K562 (cell line): ENCODE measurements at regions of chr4 and their contacts with region 1.

Region 1: DNA sequence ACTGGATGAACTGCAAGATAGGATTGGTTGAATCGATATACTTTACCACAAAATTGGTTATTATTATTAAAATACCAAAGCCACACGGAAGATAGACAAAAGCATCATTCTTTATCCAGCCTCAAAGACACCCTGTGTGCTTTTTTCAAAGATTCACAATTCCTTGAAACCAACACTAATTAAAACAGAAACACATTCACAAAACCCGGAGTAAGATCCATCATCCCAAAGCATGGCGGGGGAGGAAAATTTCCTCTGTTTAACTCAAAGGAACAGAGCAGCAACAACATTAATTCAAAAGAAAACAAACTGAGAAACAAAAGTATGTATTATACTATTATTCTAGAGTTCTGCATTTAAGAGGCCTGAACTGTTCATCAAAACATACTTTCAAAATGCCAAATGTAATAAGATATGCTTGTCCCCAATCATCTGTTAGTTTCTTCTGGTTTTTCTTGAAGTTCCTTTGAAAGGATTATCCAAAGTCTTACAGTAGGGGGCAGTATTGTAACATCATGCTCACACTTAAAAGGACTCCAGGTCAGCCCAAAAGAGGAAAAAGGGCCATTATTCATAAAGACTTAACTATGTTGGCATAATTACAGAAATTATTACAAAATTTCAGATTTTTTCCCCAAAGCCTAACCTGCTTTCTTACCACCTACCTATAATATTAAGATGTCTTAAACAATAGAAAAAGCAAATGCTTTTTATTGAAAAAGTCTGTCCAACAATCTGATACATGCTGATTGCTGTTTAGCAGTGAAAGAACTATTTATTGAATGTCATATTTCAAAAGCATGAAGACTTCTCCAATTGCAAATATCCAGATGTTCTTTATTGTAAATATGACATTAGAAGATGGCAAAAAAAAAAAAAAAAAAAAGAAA is 168.7 kb downstream of the SCFD2 start:
- DNase-seq: peak; percentile 49 to 77 (median 56)
- ATAC-seq: peak; percentile 86
- H3K4me3 ChIP-seq: no peak overlapping the region
- H3K27ac ChIP-seq: no peak overlapping the region
- H3K4me1 ChIP-seq: no peaks in the 10 kb centered on the region
- H3K27me3 ChIP-seq: no peaks in the 10 kb centered on the region
- CTCF ChIP-seq: peak; percentile 57 to 83 (median 60); a peak in 5 of 6 replicates
- EP300 ChIP-seq: no peak
- POLR2A ChIP-seq: no peak
- RAD21 ChIP-seq: peak; percentile 77 to 84

Region 2: DNA sequence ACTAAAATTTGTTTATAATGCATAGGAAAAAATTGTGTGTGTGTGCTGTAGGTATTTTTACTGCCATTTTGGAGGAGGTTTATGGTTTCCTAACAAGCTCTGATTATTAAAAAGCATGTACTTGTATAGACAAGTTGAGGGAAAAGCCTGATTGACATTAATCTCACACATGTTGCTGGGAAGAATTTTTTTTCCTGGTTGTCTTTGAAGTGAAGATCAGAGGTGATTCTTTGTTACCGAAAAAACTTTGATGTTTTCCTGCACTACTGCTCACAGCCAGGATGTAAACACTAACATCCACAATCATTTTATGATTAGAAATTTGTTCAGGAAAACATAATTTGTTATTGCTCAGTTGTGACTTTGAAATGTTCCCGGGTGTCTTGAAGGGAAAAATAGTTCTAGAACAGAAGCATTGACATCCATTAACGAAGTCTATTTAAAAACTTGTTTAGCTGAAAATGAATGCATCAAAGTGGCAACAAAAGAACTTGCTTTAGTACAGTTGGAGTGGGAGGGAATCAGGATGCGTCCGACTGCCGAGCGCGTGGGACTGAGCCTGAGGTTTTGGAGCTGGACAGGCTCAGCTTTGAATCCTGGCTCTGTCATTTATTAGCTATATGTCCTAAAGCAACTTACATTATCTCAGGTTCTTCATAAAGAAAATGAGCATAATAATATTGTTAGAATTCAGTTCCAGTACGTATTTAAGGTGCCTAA is 437.0 kb before region 1 on chr4:
- CTCF ChIA-PET with region 1: no interaction called
- POLR2A ChIA-PET with region 1: no interaction called
- in situ Hi-C with region 1: no loop called
- intact Hi-C with region 1: no loop called
- DNase-seq: no peak
- ATAC-seq: no peak
- H3K4me3 ChIP-seq: no peak overlapping the region
- H3K27ac ChIP-seq: no peak overlapping the region
- H3K4me1 ChIP-seq: no peaks in the 10 kb centered on the region
- H3K27me3 ChIP-seq: peaks cover 3 to 15% of the 10 kb centered on the region in 2 experiments; a peak in 4 of 5 replicates
- CTCF ChIP-seq: no peak
- EP300 ChIP-seq: no peak
- POLR2A ChIP-seq: no peak
- RAD21 ChIP-seq: no peak

Region 3: GRCh38 chr4:52911684-52912294 is 285.3 kb before region 1 on chr4:
- CTCF ChIA-PET with region 1: no interaction called
- POLR2A ChIA-PET with region 1: no interaction called
- in situ Hi-C with region 1: no loop called
- intact Hi-C with region 1: no loop called
- DNase-seq: peak; percentile 64 to 83 (median 76)
- ATAC-seq: peak; percentile 94
- H3K4me3 ChIP-seq: no peak overlapping the region
- H3K27ac ChIP-seq: no peak overlapping the region
- H3K4me1 ChIP-seq: no peaks in the 10 kb centered on the region
- H3K27me3 ChIP-seq: no peaks in the 10 kb centered on the region
- CTCF ChIP-seq: peak; percentile 73 to 87 (median 75)
- EP300 ChIP-seq: no peak
- POLR2A ChIP-seq: no peak
- RAD21 ChIP-seq: peak in 1 of 2 experiments; percentile 45; a peak in 2 of 4 replicates

Region 4: DNA sequence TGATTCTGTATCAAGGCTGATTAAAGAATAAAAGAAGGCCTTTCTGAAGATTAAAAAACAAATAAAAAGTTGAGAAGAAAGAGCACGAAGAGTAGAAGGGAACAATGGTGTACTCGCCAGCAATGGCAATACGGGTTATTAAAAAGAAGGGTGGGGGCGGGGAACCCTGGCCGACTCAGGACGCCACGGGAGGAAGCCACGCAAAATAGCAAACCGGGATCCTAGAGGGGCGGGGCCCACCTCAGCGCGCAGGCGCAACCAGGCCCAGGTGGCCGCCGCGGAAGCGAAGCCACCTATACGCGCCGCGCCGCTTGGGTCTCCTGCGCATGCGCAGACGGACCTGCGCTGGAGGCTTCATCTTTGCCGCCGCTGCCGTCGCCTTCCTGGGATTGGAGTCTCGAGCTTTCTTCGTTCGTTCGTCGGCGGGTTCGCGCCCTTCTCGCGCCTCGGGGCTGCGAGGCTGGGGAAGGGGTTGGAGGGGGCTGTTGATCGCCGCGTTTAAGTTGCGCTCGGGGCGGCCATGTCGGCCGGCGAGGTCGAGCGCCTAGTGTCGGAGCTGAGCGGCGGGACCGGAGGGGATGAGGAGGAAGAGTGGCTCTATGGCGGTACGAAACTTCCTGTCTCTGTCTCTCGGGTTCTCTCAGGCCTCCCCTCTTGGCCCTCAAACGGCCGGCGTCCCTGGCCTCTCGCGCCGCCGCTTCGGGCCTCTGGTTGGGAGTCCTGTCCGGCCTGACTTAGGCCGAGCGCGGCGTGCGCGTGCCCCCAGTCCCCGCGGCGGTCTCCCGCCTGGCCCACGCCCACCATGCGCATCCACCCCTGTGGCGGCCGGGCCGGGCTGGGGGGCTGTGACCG is 180.4 kb after region 1 on chr4 and contains the start of gene FIP1L1:
- CTCF ChIA-PET with region 1: no interaction called
- POLR2A ChIA-PET with region 1: no interaction called
- in situ Hi-C with region 1: no loop called
- intact Hi-C with region 1: loop called (anchors 10 kb)
- DNase-seq: peak; percentile 97 to 99 (median 98)
- ATAC-seq: peak; percentile 93
- H3K4me3 ChIP-seq: peak within 1 kb of the TSS; percentile 63
- H3K27ac ChIP-seq: peak within 1 kb of the TSS; percentile 80
- H3K4me1 ChIP-seq: peaks cover 8 to 19% of the 10 kb centered on the region in 2 experiments; a peak in 3 of 5 replicates
- H3K27me3 ChIP-seq: no peaks in the 10 kb centered on the region
- CTCF ChIP-seq: no peak
- EP300 ChIP-seq: no peak
- POLR2A ChIP-seq: peak; percentile 91
- RAD21 ChIP-seq: no peak
- polyA plus RNA-seq, gene FIP1L1: 35.3 TPM

Region 5: GRCh38 chr4:53614591-53614990 is 417.5 kb after region 1 on chr4:
- CTCF ChIA-PET with region 1: no interaction called
- POLR2A ChIA-PET with region 1: no interaction called
- in situ Hi-C with region 1: no loop called
- intact Hi-C with region 1: loop called (anchors 5 kb)
- DNase-seq: peak in 1 of 4 experiments; percentile 15
- ATAC-seq: peak; percentile 81
- H3K4me3 ChIP-seq: no peak overlapping the region
- H3K27ac ChIP-seq: no peak overlapping the region
- H3K4me1 ChIP-seq: no peaks in the 10 kb centered on the region
- H3K27me3 ChIP-seq: no peaks in the 10 kb centered on the region
- CTCF ChIP-seq: peak; percentile 13 to 41 (median 37); a peak in 2 of 6 replicates
- EP300 ChIP-seq: no peak
- POLR2A ChIP-seq: no peak
- RAD21 ChIP-seq: peak; percentile 25 to 57

Region 6: DNA sequence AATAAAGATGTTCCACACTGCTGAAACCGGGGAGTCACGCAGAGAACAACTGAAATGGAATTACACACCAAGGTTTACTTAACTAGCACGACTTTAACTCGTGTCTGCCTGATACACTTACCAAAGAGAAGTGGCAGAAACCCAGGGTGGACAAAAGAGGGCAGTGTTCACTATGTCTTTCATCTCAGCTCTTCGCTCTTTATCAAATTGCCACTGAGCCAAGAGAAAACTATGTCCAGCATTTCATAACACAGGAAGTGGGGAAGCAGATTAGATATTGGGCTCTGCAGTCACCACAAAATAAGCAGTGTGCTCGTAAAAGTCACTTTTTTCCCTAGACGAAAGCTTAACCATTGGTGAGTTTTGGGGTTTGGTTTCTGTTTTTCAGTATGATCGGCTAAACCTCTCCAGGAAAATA is 711.5 kb after region 1 on chr4:
- CTCF ChIA-PET with region 1: no interaction called
- POLR2A ChIA-PET with region 1: no interaction called
- in situ Hi-C with region 1: no loop called
- intact Hi-C with region 1: loop called (anchors 5 kb)
- DNase-seq: peak; percentile 16 to 67 (median 38)
- ATAC-seq: peak; percentile 94
- H3K4me3 ChIP-seq: no peak overlapping the region
- H3K27ac ChIP-seq: no peak overlapping the region
- H3K4me1 ChIP-seq: peaks cover 0 to 5% of the 10 kb centered on the region in 2 experiments; a peak in 1 of 5 replicates
- H3K27me3 ChIP-seq: peaks cover 2 to 10% of the 10 kb centered on the region in 2 experiments; a peak in 4 of 5 replicates
- CTCF ChIP-seq: peak; percentile 71 to 86 (median 81)
- EP300 ChIP-seq: peak; percentile 37; the same call in 1 of the 2 replicates
- POLR2A ChIP-seq: no peak
- RAD21 ChIP-seq: peak; percentile 86

Region 7: GRCh38 chr4:54233277-54233696 is 1036.2 kb after region 1 on chr4:
- CTCF ChIA-PET with region 1: interaction called, 6 read pairs
- POLR2A ChIA-PET with region 1: no interaction called
- in situ Hi-C with region 1: loop called (anchors 5 kb)
- intact Hi-C with region 1: loop called (anchors 1 kb)
- DNase-seq: peak; percentile 68 to 83 (median 74)
- ATAC-seq: peak; percentile 98
- H3K4me3 ChIP-seq: no peak overlapping the region
- H3K27ac ChIP-seq: no peak overlapping the region
- H3K4me1 ChIP-seq: peaks cover 0 to 12% of the 10 kb centered on the region in 2 experiments; a peak in 2 of 5 replicates
- H3K27me3 ChIP-seq: peaks cover 3 to 26% of the 10 kb centered on the region in 2 experiments; a peak in 3 of 5 replicates
- CTCF ChIP-seq: peak; percentile 72 to 78 (median 75)
- EP300 ChIP-seq: no peak
- POLR2A ChIP-seq: no peak
- RAD21 ChIP-seq: peak; percentile 62 to 70